ENCODE measurements at regions of chr4 and their contacts with region 1.

Region 1: GRCh38 chr4:102430461-102430910 is 70.7 kb upstream of the NFKB1 start:
- DNase-seq: peak; percentile 54
- H3K4me3 Mint-ChIP-seq: peak overlapping the region; percentile 90
- H3K27ac Mint-ChIP-seq: peak overlapping the region; percentile 88
- H3K4me1 Mint-ChIP-seq: peaks cover 14% of the 10 kb centered on the region
- H3K27me3 Mint-ChIP-seq: peaks cover 8% of the 10 kb centered on the region

Region 2: GRCh38 chr4:101169044-101170014 is 1261.2 kb before region 1 on chr4:
- intact Hi-C with region 1: loop called (anchors 2 kb)
- DNase-seq: peak; percentile 87
- H3K4me3 Mint-ChIP-seq: no peak overlapping the region
- H3K27ac Mint-ChIP-seq: no peak overlapping the region
- H3K4me1 Mint-ChIP-seq: peaks cover 2% of the 10 kb centered on the region
- H3K27me3 Mint-ChIP-seq: no peaks in the 10 kb centered on the region

Region 3: DNA sequence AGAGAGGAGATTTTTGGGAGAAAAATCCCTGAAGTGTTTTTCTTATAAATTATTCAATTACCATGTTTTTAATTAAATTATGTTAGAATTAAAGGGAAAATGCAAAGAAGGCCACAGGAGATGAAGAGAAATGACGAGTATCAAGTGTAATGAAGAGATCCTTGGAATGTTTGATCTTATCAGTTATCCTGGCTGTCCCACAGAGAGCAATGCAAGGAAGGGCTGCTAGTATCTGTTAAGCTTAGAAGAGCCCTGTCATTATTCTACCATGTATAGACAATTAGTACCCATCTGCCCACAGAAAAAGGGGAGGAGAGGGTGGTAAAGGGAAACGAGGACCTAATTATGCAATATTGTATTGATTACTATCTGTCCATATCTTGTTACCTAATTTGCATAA is 382.9 kb before region 1 on chr4:
- intact Hi-C with region 1: no loop called
- DNase-seq: no peak
- H3K4me3 Mint-ChIP-seq: no peak overlapping the region
- H3K27ac Mint-ChIP-seq: no peak overlapping the region
- H3K4me1 Mint-ChIP-seq: no peaks in the 10 kb centered on the region
- H3K27me3 Mint-ChIP-seq: peaks cover 1% of the 10 kb centered on the region

Region 4: GRCh38 chr4:102217345-102217744 is 213.1 kb before region 1 on chr4:
- intact Hi-C with region 1: no loop called
- DNase-seq: no peak
- H3K4me3 Mint-ChIP-seq: no peak overlapping the region
- H3K27ac Mint-ChIP-seq: no peak overlapping the region
- H3K4me1 Mint-ChIP-seq: no peaks in the 10 kb centered on the region
- H3K27me3 Mint-ChIP-seq: peaks cover 9% of the 10 kb centered on the region

Region 5: DNA sequence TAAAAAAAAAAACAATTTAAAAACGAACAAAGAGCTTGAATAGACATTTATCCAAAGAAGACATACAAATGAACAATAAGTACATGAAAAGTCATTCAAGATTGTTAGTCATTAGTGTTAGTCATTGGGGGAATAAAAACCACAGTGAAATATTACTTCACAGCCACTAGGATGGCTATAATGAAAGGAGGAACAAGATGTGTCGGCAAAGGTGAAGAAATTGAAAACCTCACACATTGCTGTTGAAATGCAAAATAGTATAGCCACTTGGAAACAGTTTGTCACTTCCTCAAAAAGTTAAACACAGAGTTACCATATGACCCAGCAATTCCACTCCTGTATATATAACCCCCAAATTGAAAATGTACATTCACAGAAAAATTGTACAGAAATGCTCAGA is 40.0 kb before region 1 on chr4:
- intact Hi-C with region 1: loop called (anchors 1 kb)
- DNase-seq: no peak
- H3K4me3 Mint-ChIP-seq: no peak overlapping the region
- H3K27ac Mint-ChIP-seq: peak overlapping the region; percentile 69
- H3K4me1 Mint-ChIP-seq: peaks cover 10% of the 10 kb centered on the region
- H3K27me3 Mint-ChIP-seq: peaks cover 5% of the 10 kb centered on the region

Region 6: GRCh38 chr4:102620697-102621497 is 190.4 kb after region 1 on chr4:
- intact Hi-C with region 1: loop called (anchors 1 kb)
- DNase-seq: no peak
- H3K4me3 Mint-ChIP-seq: no peak overlapping the region
- H3K27ac Mint-ChIP-seq: peak overlapping the region; percentile 62
- H3K4me1 Mint-ChIP-seq: peaks cover 53% of the 10 kb centered on the region
- H3K27me3 Mint-ChIP-seq: no peaks in the 10 kb centered on the region

Region 7: DNA sequence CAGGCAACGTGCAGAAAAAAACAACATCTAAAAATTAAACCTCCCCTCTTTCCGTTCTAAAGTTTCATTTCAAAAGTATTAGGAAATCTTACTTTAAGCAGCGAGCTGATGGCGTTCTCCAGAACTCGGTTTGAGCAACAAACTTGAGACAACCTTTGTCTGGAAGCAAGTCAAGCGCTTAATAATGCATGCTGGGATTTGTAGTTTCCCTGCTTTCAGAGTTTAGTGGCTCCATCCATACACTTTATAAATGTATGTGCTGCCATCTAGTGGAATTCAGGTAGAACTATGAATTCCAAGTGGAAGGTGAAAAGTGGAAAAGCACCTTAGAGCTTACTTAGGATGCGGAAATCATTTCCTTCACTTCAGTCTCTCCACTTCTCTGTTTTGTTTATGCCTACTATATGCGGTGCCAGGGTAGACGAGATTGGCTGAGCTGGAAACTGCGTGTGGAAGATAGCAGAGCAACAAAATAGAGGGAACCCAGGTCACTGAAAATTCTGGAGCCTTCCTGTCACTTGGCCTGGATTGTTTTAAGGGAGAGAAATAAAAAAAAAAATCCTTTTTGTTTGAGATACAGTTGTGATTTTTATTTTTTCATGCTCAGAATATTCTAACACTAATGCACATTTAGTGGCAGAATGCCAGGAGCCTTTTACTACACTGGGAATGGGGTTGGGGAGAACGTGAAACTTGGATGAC is 669.4 kb after region 1 on chr4 and contains the start of gene BDH2:
- intact Hi-C with region 1: loop called (anchors 2 kb)
- DNase-seq: peak; percentile 87
- H3K4me3 Mint-ChIP-seq: peak within 1 kb of the TSS; percentile 84
- H3K27ac Mint-ChIP-seq: peak within 1 kb of the TSS; percentile 83
- H3K4me1 Mint-ChIP-seq: peaks cover 8% of the 10 kb centered on the region
- H3K27me3 Mint-ChIP-seq: no peaks in the 10 kb centered on the region
- total RNA-seq, gene BDH2: 11.0 and 13.2 TPM in 2 replicates